ENCODE measurements at regions of chr9 and their contacts with region 1.

Region 1: DNA sequence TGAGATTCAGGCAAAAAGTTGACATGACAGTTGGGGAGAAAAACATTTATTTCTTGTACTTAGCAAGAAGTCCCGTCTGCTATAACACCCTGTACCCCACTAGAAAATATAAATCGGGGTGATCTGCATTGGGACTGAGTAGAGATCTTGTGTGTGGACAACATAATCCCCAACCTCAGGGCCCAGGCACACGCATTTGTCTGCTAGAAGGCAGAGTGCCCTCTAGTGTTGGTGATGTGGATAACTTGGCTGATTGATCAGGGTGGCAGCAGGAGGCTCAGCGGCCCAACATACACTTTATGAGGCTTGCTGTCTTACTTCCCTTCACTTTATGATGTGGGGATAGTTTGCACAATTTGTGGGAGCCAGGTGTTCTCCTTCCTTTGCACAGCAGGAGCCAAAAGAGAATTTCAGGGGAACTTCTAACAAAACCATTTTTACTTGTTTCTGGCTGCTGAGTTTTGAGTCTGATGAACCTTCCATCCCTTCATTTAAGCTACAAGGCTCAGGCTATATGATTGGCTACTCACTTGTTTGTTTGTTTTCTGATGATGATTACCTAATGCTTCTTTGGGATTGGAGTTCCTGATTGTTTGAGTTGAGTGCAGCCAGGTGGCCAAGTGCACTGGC is 263.2 kb downstream of the DMAC1 start:
- DNase-seq: peak; percentile 56
- ATAC-seq: peak; percentile 94
- H3K4me3 ChIP-seq: no peak overlapping the region
- H3K27ac ChIP-seq: no peak overlapping the region
- H3K4me1 ChIP-seq: no peaks in the 10 kb centered on the region
- H3K27me3 ChIP-seq: no peaks in the 10 kb centered on the region; the same call in 1 of the 2 replicates
- CTCF ChIP-seq: peak; percentile 53
- POLR2A ChIP-seq: no peak
- RAD21 ChIP-seq: peak; percentile 61

Region 2: DNA sequence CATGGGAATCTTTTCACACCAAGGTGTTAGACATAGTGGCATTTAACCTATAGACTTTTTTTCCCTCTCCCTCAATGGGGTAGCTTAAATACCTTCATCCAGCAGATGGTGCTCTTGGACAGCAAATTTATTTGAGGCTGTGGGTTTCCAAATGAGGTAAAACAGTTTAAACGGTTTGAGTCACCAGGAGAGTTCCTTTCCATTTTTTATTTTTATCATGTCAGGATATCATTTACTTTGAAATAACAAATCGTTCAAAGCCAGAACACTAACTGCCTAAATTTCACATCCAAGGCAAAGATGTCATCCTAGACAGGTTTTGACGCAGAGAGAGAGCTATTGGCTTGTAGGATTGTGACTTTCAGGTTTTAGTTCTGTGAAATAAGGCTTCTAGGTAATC is 709.0 kb before region 1 on chr9:
- CTCF ChIA-PET with region 1: no interaction called
- POLR2A ChIA-PET with region 1: no interaction called
- dilution Hi-C with region 1: no loop called
- in situ Hi-C with region 1: no loop called
- intact Hi-C with region 1: loop called (anchors 5 kb)
- DNase-seq: peak; percentile 54
- ATAC-seq: peak; percentile 86
- H3K4me3 ChIP-seq: no peak overlapping the region
- H3K27ac ChIP-seq: no peak overlapping the region
- H3K4me1 ChIP-seq: no peaks in the 10 kb centered on the region
- H3K27me3 ChIP-seq: no peaks in the 10 kb centered on the region
- CTCF ChIP-seq: peak; percentile 76
- POLR2A ChIP-seq: no peak
- RAD21 ChIP-seq: peak; percentile 74

Region 3: GRCh38 chr9:7273391-7273974 is 262.9 kb before region 1 on chr9:
- CTCF ChIA-PET with region 1: interaction called, 4 read pairs
- POLR2A ChIA-PET with region 1: no interaction called
- dilution Hi-C with region 1: no loop called
- in situ Hi-C with region 1: no loop called
- intact Hi-C with region 1: loop called (anchors 1 kb)
- DNase-seq: peak; percentile 40
- ATAC-seq: peak; percentile 85
- H3K4me3 ChIP-seq: no peak overlapping the region
- H3K27ac ChIP-seq: no peak overlapping the region
- H3K4me1 ChIP-seq: no peaks in the 10 kb centered on the region
- H3K27me3 ChIP-seq: peaks cover 6% of the 10 kb centered on the region
- CTCF ChIP-seq: peak; percentile 49
- POLR2A ChIP-seq: no peak
- RAD21 ChIP-seq: peak; percentile 54

Region 4: DNA sequence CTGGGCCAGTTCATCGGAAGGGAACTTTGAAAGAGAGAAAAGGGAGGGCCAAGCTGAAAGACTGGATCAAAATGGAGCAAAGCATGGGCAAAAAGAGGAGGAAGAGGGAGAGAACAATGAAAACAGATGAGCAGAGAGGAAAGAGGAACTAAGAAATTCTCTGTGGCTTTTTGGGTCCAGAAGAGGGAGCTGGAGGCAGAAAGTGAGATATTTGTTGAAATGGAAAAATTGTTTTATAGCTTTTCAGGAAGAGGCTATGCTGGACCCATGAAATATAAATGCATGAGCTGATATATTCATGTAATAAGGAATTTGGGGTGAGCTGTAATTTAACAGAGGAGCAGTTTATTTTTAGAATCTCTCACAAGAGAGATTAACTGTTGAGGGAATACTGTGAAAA is 194.2 kb before region 1 on chr9:
- CTCF ChIA-PET with region 1: no interaction called
- POLR2A ChIA-PET with region 1: no interaction called
- dilution Hi-C with region 1: no loop called
- in situ Hi-C with region 1: no loop called
- intact Hi-C with region 1: loop called (anchors 2 kb)
- DNase-seq: no peak
- ATAC-seq: peak; percentile 46; the same call in 1 of the 2 replicates
- H3K4me3 ChIP-seq: no peak overlapping the region
- H3K27ac ChIP-seq: peak overlapping the region; percentile 55; the same call in 1 of the 2 replicates
- H3K4me1 ChIP-seq: peaks cover 3% of the 10 kb centered on the region
- H3K27me3 ChIP-seq: no peaks in the 10 kb centered on the region
- CTCF ChIP-seq: peak; percentile 24; the same call in 1 of the 2 replicates
- POLR2A ChIP-seq: no peak
- RAD21 ChIP-seq: 0 out of 2 replicates have a peak, but pooled peaks have one; percentile 2

Region 5: DNA sequence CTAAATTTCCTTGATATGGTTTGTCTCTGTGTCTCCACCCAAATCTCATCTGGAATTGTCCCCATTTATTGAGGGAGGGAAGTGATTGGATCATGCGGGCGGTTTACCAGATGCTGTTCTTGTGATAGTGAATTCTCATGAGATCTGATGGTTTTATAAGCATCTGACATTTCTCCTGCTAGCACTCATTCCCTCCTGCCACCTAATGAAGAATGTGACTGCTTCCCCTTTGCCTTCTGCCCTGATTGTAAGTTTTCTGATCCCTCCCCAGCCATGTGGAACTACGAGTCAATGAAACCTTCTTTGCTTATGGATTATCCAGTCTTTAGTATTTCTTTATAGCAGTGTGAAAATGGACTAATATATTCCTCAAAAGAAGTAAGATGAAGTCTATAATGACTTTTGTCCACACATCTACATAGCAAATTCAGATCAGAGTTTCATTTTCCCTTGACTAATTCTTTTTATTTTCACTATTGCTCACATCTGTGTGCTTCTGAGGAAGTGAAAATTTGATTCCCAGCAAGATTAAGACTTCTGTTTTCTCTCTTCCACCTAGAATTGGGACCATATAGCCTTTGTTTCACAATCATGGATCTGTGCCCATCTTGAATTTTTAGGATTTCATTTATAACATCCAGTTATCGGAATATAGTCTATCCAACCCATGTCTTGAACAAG is 130.4 kb before region 1 on chr9:
- CTCF ChIA-PET with region 1: interaction called, 3 read pairs
- POLR2A ChIA-PET with region 1: no interaction called
- dilution Hi-C with region 1: no loop called
- in situ Hi-C with region 1: no loop called
- intact Hi-C with region 1: loop called (anchors 1 kb)
- DNase-seq: no peak
- ATAC-seq: no peak
- H3K4me3 ChIP-seq: no peak overlapping the region
- H3K27ac ChIP-seq: no peak overlapping the region
- H3K4me1 ChIP-seq: peaks cover 3% of the 10 kb centered on the region; the same call in 1 of the 2 replicates
- H3K27me3 ChIP-seq: no peaks in the 10 kb centered on the region
- CTCF ChIP-seq: no peak
- POLR2A ChIP-seq: no peak
- RAD21 ChIP-seq: no peak

Region 6: DNA sequence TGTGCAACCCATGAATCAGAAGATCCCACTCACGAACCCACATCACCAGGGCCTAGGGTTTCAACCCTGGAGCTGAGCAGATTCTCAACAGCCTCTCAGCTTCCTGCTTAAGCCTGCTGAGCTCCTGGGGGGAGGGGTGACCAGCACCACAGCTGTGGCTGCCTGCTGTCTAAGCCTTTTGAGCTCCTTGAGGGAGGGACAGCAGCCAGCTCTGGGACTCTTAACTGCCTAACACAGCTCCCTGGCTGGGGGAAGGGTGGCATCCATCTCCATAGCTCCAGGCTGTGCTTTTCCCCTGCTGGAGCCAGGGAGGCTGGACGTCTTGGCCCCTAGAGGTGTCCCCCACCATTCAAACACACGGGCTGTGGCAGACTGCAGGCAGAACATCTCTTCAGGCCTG is 12.8 kb after region 1 on chr9:
- CTCF ChIA-PET with region 1: no interaction called
- POLR2A ChIA-PET with region 1: no interaction called
- dilution Hi-C with region 1: no loop called
- in situ Hi-C with region 1: no loop called
- intact Hi-C with region 1: no loop called
- DNase-seq: no peak
- ATAC-seq: no peak; the same call in 1 of the 2 replicates
- H3K4me3 ChIP-seq: no peak overlapping the region
- H3K27ac ChIP-seq: no peak overlapping the region
- H3K4me1 ChIP-seq: peaks cover 2% of the 10 kb centered on the region; the same call in 1 of the 2 replicates
- H3K27me3 ChIP-seq: no peaks in the 10 kb centered on the region; the same call in 1 of the 2 replicates
- CTCF ChIP-seq: no peak
- POLR2A ChIP-seq: no peak
- RAD21 ChIP-seq: no peak